HepG2 (cell line): ENCODE measurements at regions of chr5 and their contacts with region 1.

Region 1: GRCh38 chr5:41903892-41904799 is at the start of gene RIMOC1:
- DNase-seq: peak; percentile 99
- ATAC-seq: peak; percentile 99
- H3K4me3 ChIP-seq: peak within 1 kb of the TSS; percentile 87 to 94 (median 93)
- H3K27ac ChIP-seq: peak within 1 kb of the TSS; percentile 86
- H3K4me1 ChIP-seq: peaks cover 31% of the 10 kb centered on the region
- H3K27me3 ChIP-seq: no peaks in the 10 kb centered on the region; a peak in 1 of 5 replicates
- CTCF ChIP-seq: no peak
- EP300 ChIP-seq: no peak
- POLR2A ChIP-seq: peak; percentile 79 to 93
- RAD21 ChIP-seq: peak; percentile 56
- total RNA-seq, gene RIMOC1: 16.9 and 29.6 TPM in 2 replicates

Region 2: DNA sequence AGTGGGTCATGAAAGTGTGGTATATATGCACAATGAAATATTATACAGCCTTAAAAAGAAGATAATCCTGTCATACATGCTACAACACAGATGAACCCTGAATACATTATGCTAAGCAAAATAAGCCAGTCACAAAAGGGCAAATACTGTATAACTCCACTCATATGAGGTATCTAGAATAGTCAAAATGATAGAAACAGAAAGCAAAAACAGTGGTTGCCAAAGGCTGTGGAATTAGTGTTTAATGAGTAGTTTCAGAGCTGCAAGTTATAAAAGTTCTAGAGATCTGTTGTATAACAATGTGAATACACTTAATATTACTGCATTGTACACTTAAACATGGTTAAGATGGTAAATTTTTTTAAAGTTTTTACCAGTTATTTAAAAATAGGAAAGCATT is 168.9 kb before region 1 on chr5:
- CTCF ChIA-PET with region 1: no interaction called
- POLR2A ChIA-PET with region 1: no interaction called
- in situ Hi-C with region 1: no loop called
- intact Hi-C with region 1: no loop called
- DNase-seq: no peak
- ATAC-seq: no peak
- H3K4me3 ChIP-seq: no peak overlapping the region
- H3K27ac ChIP-seq: no peak overlapping the region
- H3K4me1 ChIP-seq: no peaks in the 10 kb centered on the region
- H3K27me3 ChIP-seq: no peaks in the 10 kb centered on the region
- CTCF ChIP-seq: no peak
- EP300 ChIP-seq: no peak
- POLR2A ChIP-seq: no peak
- RAD21 ChIP-seq: no peak

Region 3: GRCh38 chr5:41869739-41870626 is 34.2 kb before region 1 on chr5 and contains the start of gene OXCT1:
- CTCF ChIA-PET with region 1: no interaction called
- POLR2A ChIA-PET with region 1: no interaction called
- in situ Hi-C with region 1: no loop called
- intact Hi-C with region 1: loop called (anchors 1 kb)
- DNase-seq: peak; percentile 10
- ATAC-seq: peak; percentile 85
- H3K4me3 ChIP-seq: peak within 1 kb of the TSS; percentile 22 to 68 (median 54); a peak in 5 of 6 replicates
- H3K27ac ChIP-seq: no peak within 1 kb of the TSS
- H3K4me1 ChIP-seq: peaks cover 8% of the 10 kb centered on the region; the same call in 1 of the 2 replicates
- H3K27me3 ChIP-seq: peaks cover 0 to 8% of the 10 kb centered on the region in 2 experiments; a peak in 2 of 5 replicates
- CTCF ChIP-seq: no peak
- EP300 ChIP-seq: no peak
- POLR2A ChIP-seq: no peak
- RAD21 ChIP-seq: no peak
- total RNA-seq, gene OXCT1: 3.7 and 4.7 TPM in 2 replicates

Region 4: DNA sequence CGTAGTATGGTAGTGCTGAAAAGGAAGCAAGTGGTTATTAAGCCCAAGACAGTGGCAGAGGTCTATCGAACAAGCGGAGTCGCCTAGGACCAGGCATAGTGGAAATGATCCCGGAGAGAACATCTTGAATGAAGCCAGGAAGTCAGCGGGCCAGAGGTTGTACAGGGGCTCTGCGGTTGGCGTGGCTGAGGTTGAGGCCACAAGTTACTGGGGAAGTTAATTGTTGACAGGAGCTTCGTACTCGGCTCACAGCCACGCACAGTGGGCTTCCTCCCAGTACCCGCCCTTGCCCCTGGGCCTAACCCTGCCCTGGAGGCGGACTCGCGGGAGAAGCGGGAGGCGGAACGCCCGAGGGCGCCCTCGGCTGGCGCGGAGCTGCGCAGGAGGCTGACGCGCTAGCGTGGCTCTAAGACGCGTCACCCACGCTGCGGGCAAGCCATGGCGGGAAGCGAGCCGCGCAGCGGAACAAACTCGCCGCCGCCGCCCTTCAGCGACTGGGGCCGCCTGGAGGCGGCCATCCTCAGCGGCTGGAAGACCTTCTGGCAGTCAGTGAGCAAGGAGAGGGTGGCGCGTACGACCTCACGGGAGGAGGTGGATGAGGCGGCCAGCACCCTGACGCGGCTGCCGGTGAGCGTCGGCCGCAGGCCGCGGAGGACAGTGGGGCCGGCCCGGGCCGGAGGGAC is 20.9 kb after region 1 on chr5 and contains the start of gene FBXO4:
- CTCF ChIA-PET with region 1: no interaction called
- POLR2A ChIA-PET with region 1: interaction called, 81 read pairs
- in situ Hi-C with region 1: no loop called
- intact Hi-C with region 1: loop called (anchors 1 kb)
- DNase-seq: peak; percentile 71
- ATAC-seq: peak; percentile 98
- H3K4me3 ChIP-seq: peak within 1 kb of the TSS; percentile 67 to 91 (median 82)
- H3K27ac ChIP-seq: peak within 1 kb of the TSS; percentile 79
- H3K4me1 ChIP-seq: peaks cover 50% of the 10 kb centered on the region
- H3K27me3 ChIP-seq: no peaks in the 10 kb centered on the region; a peak in 1 of 5 replicates
- CTCF ChIP-seq: peak; percentile 93
- EP300 ChIP-seq: peak; percentile 32 to 49; a peak in 2 of 4 replicates
- POLR2A ChIP-seq: peak; percentile 77 to 82
- RAD21 ChIP-seq: peak; percentile 63
- total RNA-seq, gene FBXO4: 16.4 and 19.1 TPM in 2 replicates

Region 5: DNA sequence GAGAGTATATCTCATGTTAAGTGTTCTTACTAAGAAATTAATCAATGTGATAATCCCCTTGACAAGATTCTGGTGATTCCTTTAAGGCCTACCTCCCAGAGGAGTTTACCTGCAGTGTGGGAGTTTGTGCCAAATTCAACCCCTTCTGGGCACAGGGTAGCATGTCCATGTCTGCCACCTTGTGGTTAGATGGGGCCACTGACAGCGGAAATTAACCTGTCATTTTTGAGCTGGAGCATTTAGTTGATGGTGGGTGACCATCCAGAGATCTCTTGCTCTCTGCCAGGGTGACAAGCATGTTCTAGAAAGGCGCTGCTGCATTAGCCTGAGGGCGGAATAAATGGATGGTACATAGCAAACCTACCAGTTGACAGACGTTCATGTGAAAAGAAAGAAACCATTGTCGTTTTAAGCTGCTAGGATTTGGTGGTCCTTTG is 153.1 kb after region 1 on chr5:
- CTCF ChIA-PET with region 1: no interaction called
- POLR2A ChIA-PET with region 1: no interaction called
- in situ Hi-C with region 1: no loop called
- intact Hi-C with region 1: loop called (anchors 1 kb)
- DNase-seq: peak; percentile 28
- ATAC-seq: peak; percentile 93
- H3K4me3 ChIP-seq: no peak overlapping the region
- H3K27ac ChIP-seq: no peak overlapping the region
- H3K4me1 ChIP-seq: no peaks in the 10 kb centered on the region
- H3K27me3 ChIP-seq: no peaks in the 10 kb centered on the region
- CTCF ChIP-seq: peak; percentile 81
- EP300 ChIP-seq: no peak
- POLR2A ChIP-seq: no peak
- RAD21 ChIP-seq: peak; percentile 61; the same call in 1 of the 2 replicates